HepG2 (cell line): ENCODE measurements at regions of chr2 and their contacts with region 1.

Region 1: GRCh38 chr2:215396595-215397313 is 39.1 kb downstream of the FN1 start:
- DNase-seq: no peak
- ATAC-seq: peak; percentile 6; the same call in 2 of the 3 replicates
- H3K4me3 ChIP-seq: no peak overlapping the region
- H3K27ac ChIP-seq: no peak overlapping the region
- H3K4me1 ChIP-seq: peaks cover 27% of the 10 kb centered on the region
- H3K27me3 ChIP-seq: no peaks in the 10 kb centered on the region
- CTCF ChIP-seq: no peak
- EP300 ChIP-seq: no peak
- POLR2A ChIP-seq: peak; percentile 40 to 46; a peak in 2 of 4 replicates
- RAD21 ChIP-seq: no peak

Region 2: DNA sequence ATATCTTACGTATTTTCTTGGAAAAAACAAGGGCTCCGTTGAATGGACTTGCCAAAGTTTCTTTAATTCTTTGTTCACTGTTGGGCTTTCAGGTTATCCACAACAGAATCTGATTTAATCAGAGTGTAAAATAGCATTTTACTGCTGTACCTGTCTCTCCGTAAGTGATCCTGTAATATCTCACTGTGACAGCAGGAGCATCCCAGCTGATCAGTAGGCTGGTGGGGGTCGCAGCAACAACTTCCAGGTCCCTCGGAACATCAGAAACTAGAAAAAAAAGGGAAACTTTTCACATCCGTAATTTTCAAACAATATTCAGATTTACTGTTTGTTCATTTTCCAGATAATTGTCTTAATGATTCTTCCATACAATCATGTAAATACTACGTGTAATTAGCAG is 12.0 kb before region 1 on chr2:
- CTCF ChIA-PET with region 1: no interaction called
- POLR2A ChIA-PET with region 1: no interaction called
- in situ Hi-C with region 1: no loop called
- intact Hi-C with region 1: no loop called
- DNase-seq: no peak
- ATAC-seq: no peak
- H3K4me3 ChIP-seq: no peak overlapping the region
- H3K27ac ChIP-seq: no peak overlapping the region
- H3K4me1 ChIP-seq: no peaks in the 10 kb centered on the region
- H3K27me3 ChIP-seq: no peaks in the 10 kb centered on the region
- CTCF ChIP-seq: no peak
- EP300 ChIP-seq: no peak
- POLR2A ChIP-seq: peak in 1 of 2 experiments; percentile 21; a peak in 1 of 4 replicates
- RAD21 ChIP-seq: no peak

Region 3: GRCh38 chr2:215410932-215411285 is 14.2 kb after region 1 on chr2:
- CTCF ChIA-PET with region 1: no interaction called
- POLR2A ChIA-PET with region 1: interaction called, 12 read pairs
- in situ Hi-C with region 1: no loop called
- intact Hi-C with region 1: no loop called
- DNase-seq: peak; percentile 57
- ATAC-seq: no peak
- H3K4me3 ChIP-seq: no peak overlapping the region
- H3K27ac ChIP-seq: peak overlapping the region; percentile 3
- H3K4me1 ChIP-seq: peaks cover 67% of the 10 kb centered on the region
- H3K27me3 ChIP-seq: no peaks in the 10 kb centered on the region
- CTCF ChIP-seq: no peak
- EP300 ChIP-seq: 0 out of 4 replicates have a peak, but pooled peaks of 1 of the 2 experiments have one; percentile 10
- POLR2A ChIP-seq: peak in 1 of 2 experiments; percentile 31; a peak in 1 of 4 replicates
- RAD21 ChIP-seq: no peak